ENCODE measurements at regions of chr12 and their contacts with region 1.

Region 1: DNA sequence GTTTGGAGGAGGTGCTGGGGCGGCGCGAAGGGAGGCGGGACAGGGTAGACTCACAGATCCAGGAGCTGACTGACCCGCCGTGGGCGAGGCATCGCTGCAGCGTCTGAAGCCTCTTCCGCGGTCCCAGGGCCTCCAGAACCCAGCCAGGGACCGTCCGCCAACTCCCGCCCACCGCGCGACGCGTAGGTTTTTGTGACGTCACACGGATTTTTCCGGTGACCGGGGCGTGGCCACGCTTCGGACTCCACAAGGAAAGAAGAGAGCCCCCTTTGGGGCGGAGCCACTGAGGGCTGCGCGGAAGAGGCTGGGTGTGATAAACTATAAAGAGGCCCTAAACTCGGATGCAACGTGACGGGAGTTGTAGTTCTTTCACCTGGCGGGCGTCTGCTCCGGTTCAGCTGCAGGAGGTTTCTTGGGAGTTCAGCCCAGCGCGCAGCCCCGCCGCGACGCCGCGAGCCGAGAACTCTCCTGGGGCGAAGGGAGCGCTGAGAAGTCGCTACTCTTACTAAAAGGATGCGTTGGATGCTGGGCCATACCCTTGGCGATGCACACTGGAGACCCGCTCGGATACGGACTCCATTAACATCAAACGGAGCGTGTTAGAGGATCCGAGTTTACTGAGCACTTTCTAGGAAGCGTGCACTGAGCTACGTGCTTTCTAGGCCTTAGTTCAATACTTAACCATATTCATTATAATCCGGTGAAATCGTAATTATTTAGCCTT is at the start of gene AMN1:
- DNase-seq: peak; percentile 99
- ATAC-seq: peak; percentile 93 to 96 (median 94)
- H3K4me3 ChIP-seq: peak within 1 kb of the TSS; percentile 87
- H3K27ac ChIP-seq: peak within 1 kb of the TSS; percentile 94
- H3K4me1 ChIP-seq: peaks cover 44% of the 10 kb centered on the region
- H3K27me3 ChIP-seq: no peaks in the 10 kb centered on the region
- CTCF ChIP-seq: peak; percentile 10
- total RNA-seq, gene AMN1: 10.4 to 19.8 (median 12.8) TPM

Region 2: DNA sequence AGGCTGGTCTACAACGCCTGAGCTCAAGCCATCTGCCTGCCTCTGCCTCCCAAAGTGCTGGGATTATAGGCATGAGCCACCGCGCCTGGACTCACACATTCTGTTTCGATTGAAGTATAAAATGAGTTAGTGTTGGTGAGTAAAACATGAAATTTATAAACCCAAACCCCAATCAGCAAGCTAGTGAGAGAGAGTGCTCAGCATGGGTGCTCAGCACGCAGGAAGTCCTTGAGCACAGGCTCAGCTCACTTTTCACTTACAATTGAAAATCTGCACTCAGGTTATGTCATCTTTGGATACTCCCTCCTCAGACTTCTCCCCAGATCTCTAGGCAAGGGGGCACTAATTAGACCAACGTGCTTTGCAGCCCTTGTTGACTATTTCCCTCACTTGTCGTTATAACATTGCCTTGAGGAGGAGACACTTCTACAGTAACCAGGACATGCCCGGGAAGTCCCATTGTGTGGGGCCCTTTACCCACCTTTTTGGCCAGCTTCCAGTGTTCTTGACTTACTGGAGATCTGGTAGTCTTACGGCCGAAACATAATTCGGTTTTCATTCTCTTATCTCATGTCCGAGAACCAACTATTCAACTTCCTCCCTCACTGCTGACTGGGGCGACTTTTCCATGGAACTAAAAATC is 68.3 kb after region 1 on chr12:
- intact Hi-C with region 1: no loop called
- DNase-seq: no peak
- ATAC-seq: no peak
- H3K4me3 ChIP-seq: no peak overlapping the region
- H3K27ac ChIP-seq: no peak overlapping the region
- H3K4me1 ChIP-seq: no peaks in the 10 kb centered on the region
- H3K27me3 ChIP-seq: no peaks in the 10 kb centered on the region
- CTCF ChIP-seq: no peak

Region 3: GRCh38 chr12:31959161-31959700 is 230.2 kb after region 1 on chr12 and contains the start of gene RESF1:
- intact Hi-C with region 1: loop called in 1 of 2 experiments (anchors 5 kb)
- DNase-seq: peak; percentile 88 to 91
- ATAC-seq: peak; percentile 97 to 98 (median 98)
- H3K4me3 ChIP-seq: peak within 1 kb of the TSS; percentile 74
- H3K27ac ChIP-seq: peak within 1 kb of the TSS; percentile 87
- H3K4me1 ChIP-seq: peaks cover 24% of the 10 kb centered on the region
- H3K27me3 ChIP-seq: no peaks in the 10 kb centered on the region
- CTCF ChIP-seq: no peak
- total RNA-seq, gene RESF1: 11.9 to 18.4 (median 14.2) TPM

Region 4: GRCh38 chr12:32532951-32533350 is 803.9 kb after region 1 on chr12:
- intact Hi-C with region 1: no loop called
- DNase-seq: no peak
- ATAC-seq: no peak
- H3K4me3 ChIP-seq: no peak overlapping the region
- H3K27ac ChIP-seq: peak overlapping the region; percentile 90
- H3K4me1 ChIP-seq: peaks cover 60% of the 10 kb centered on the region
- H3K27me3 ChIP-seq: no peaks in the 10 kb centered on the region
- CTCF ChIP-seq: no peak